GM13976 (cell line): ENCODE measurements at regions of chr5 and their contacts with region 1.

Region 1: DNA sequence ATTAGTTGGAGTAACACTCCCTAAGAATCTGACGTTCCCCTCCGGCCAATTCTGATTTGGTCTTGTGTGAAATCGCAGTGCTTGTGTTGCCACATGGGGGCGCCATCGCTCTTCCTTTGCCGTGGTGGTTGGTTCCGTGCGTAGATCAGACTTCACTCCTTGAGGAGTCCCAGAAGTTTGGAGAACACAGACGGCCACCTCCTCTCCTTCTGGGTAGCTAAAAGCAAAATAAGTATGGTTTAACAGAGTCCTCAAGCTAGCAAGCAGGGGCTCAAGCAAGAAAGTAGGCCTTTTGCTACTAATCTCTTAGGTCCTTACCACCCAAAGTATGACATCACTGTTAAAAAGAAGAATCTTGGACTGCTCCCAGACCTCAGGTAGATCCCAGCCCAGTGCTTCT is 59.5 kb downstream of the HSPA4 start:
- DNase-seq: peak; percentile 80
- CTCF ChIP-seq: peak; percentile 83

Region 2: DNA sequence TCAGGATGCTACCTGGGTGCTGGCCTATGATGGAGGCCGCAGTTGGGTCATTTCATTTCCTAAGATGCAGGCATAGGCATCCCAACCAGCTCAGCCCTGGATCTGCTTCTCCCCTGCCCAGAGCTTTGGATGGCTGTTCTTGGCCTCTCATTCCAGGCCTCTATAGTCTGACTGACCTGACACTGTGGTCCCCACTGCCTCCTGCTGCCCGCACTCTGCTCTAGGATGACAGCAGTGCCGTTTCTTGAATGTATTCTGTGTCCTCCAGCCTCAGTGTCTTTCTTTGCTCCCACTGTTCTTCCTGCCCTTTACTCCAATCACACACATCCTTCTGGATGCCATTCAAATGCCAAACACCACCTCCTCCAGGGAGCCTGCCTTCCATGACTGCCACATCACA is 176.2 kb after region 1 on chr5:
- in situ Hi-C with region 1: loop called (anchors 25 kb)
- DNase-seq: peak; percentile 57
- CTCF ChIP-seq: peak; percentile 74